ENCODE measurements at regions of chr4 and their contacts with region 1.

Region 1: DNA sequence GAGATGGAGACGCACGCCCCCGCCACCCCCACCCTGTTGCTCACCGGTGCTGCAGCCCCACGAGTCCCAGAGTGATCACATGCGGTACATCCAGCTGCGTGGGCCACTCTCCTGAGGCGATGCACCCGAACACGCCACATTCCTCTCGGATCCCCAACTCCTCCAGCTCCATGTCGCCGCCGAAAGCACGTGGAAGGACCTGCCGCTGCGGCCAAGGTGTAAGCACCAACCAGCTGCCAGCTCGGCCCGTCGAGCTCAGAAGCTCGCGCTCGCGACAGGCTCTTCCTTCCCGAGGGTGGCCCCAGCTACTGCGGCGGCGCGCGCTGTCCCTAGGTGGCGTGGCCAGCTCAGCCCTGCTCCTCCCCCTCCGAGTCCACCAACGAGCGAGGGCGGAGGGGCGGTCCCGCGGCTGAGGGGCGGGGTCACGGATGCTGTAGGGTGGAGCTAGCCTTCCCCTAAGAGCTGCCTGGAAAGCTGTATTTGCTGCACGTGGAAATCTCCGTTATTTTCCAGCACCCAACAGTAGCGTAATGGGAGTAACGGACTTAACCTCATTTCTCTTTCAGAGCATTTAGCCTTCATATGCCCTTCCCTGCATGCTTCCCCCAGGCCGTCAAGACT is at the start of gene PPAT:
- DNase-seq: peak; percentile 76
- H3K4me3 ChIP-seq: peak within 1 kb of the TSS; percentile 65
- H3K27me3 ChIP-seq: no peaks in the 10 kb centered on the region
- CTCF ChIP-seq: peak; percentile 45
- polyA plus RNA-seq, gene PPAT: 3.2 and 5.3 TPM in 2 replicates

Region 2: DNA sequence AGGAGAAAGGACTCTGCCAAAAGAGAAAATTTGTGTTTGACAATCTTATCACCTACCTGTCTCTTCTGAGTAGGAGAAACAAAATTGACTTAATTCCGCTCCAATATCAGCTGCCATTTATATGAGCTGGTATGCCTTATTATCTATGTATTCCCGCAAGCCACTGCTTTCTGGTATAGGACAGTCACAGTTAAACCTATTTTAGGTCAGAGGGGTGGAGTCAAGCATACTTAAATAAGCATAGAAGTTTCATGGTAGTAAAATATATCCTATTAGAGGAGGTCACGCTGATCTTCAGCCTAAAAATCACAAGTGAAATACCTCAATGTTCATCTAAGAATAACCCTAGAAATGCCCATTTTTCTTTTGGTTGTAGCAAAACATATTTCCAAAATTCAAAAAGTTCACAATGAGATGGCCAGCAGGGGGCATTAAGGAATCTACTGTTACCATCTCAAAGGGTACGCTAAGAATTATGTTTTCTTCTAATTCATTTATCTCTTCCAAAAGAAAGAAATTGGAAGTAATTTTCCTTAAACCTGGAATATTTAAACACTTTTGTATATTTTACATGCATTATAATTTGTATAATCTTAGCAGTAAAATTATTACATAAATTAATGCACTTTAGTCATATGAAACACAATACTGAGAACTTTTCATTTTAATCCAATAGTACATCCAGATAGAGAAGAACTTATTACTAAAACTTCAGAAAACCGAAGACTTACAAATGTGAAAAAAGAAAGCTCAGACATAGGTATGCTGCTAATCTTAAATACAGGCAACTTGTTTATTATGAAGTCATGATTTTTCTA is 10.5 kb before region 1 on chr4:
- CTCF ChIA-PET with region 1: interaction called, 31 read pairs
- POLR2A ChIA-PET with region 1: no interaction called
- DNase-seq: no peak
- H3K4me3 ChIP-seq: no peak overlapping the region
- H3K27me3 ChIP-seq: no peaks in the 10 kb centered on the region
- CTCF ChIP-seq: peak; percentile 66

Region 3: DNA sequence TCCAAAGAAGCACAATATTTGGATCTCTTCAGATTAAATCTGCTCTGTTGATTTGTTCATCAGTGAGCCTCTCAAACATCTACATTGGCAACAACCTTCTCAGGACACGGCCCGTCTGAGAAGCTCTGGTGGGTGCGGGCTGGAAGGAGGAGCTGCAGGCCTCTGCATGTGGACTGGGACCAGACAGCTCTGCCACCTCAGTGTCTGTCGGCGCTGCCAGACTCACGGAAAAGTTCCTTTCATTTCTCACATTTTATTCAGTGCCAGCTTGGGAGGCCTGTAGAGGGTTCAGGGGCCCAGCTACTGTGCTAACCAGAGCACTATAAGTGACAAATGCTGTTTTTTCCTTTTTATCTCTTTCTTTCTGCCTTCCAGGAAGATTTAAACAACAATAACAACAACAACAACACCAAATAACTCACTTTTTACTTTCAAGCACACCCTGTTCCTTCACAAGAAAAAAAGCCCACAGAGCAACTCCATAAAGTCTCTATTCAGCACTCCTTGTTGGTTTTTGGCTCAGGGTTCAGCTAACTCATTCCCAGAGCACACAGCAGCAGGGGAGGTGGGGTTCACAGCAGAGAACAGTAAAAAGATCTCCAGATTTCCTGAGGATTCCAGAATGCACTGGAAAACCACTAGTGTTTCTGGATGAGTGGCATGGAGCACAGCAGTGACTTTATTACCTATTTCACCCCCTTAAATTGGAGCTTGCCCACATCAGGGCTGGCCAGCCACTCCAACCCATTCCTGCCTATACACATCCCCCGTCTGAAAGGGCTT is 268.9 kb after region 1 on chr4:
- CTCF ChIA-PET with region 1: no interaction called
- POLR2A ChIA-PET with region 1: no interaction called
- DNase-seq: no peak
- H3K4me3 ChIP-seq: no peak overlapping the region
- H3K27me3 ChIP-seq: peaks cover 3% of the 10 kb centered on the region; the same call in 1 of the 2 replicates
- CTCF ChIP-seq: no peak